ENCODE measurements at regions of chr15 and their contacts with region 1.

Region 1: DNA sequence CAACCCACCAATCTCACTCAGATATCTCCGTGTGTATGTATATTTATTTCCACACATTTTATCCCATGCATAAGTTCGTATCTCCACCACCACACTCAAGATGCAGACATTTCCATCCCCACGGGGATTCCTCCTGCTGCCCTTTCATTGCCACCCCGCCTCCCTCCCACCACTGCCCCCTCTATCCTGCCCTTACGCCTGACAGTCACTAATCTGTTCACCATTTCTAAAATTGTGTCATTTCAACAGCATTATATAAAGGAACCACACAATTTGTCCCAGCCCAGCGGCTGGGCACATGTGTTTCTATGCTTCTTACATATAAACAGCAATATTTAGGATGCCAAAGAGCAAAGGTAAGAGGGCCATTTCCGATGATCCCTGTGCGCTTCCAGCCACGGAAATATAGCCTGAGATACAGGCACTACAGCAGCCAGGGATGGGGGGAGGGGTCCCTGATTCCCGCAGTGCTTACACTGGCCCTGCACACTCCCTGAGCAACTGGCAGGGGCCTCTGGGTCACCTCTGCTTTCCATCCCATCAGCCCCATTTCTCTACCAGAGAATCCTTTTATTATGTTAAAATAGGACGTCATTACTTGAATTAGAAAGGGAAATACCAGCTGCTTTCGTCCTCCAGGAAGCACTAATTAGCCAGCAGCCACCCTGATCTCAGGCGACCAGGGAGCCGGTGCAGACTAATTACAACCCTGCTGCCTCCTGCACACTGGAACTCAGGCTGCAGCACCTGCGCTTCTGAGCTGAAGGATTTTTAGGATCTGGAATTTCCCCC is 372.0 kb upstream of the ATP10A start:
- DNase-seq: no peak
- ATAC-seq: no peak
- H3K4me3 ChIP-seq: no peak overlapping the region
- H3K27ac ChIP-seq: no peak overlapping the region
- H3K4me1 ChIP-seq: no peaks in the 10 kb centered on the region
- H3K27me3 ChIP-seq: no peaks in the 10 kb centered on the region
- CTCF ChIP-seq: no peak

Region 2: DNA sequence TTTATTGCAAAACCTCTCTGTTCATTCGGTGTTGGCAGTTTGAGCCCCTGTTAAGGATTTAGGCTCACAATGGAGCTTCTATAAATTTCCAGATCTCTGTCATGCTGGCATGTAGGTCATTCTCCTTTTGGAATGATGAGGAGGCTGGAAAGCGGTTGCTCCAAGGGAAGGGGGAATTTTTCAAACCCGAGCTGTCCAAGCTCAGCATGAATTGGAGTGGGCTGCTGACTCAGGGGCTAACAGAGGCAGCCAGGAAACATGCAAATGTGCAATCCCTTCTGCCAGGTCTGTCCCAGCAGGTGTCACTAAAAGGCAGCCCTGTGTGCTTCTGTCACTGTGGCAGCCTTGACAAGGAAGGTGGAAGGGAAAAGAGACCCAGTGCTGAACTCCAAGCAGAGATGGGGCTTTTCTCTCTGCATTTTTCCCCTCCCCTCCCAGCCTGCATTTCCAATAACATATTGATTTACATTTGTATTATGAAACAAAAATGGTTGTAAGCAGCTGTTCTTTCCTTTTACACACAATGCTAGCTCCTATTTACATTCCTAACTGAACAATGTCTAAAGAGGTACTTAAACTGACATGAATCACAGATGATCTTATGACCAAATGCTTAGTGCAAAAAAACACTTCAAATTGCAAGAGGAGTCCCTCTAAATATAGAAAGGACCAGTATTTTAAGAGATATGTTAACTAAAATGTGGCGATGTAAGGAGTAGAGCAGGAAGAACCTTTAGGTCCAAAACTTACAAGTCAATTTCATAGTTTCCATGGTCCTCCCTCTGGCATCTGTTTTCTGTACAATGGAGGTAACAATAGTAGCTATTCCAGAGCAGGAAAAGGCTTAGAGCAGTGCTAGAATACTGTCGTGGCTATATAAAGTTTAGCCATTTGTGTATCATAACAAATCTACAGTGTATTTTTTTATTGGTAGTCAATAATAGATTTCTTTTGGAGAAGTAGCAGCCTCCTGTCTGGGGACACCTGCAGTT is 287.6 kb before region 1 on chr15:
- CTCF ChIA-PET with region 1: no interaction called
- POLR2A ChIA-PET with region 1: no interaction called
- in situ Hi-C with region 1: no loop called
- intact Hi-C with region 1: no loop called
- DNase-seq: no peak
- ATAC-seq: no peak
- H3K4me3 ChIP-seq: no peak overlapping the region
- H3K27ac ChIP-seq: no peak overlapping the region
- H3K4me1 ChIP-seq: no peaks in the 10 kb centered on the region
- H3K27me3 ChIP-seq: no peaks in the 10 kb centered on the region
- CTCF ChIP-seq: peak; percentile 25

Region 3: GRCh38 chr15:26037369-26037768 is 197.8 kb before region 1 on chr15:
- CTCF ChIA-PET with region 1: no interaction called
- POLR2A ChIA-PET with region 1: no interaction called
- in situ Hi-C with region 1: no loop called
- intact Hi-C with region 1: no loop called
- DNase-seq: no peak
- ATAC-seq: no peak
- H3K4me3 ChIP-seq: no peak overlapping the region
- H3K27ac ChIP-seq: no peak overlapping the region
- H3K4me1 ChIP-seq: no peaks in the 10 kb centered on the region
- H3K27me3 ChIP-seq: no peaks in the 10 kb centered on the region
- CTCF ChIP-seq: no peak

Region 4: DNA sequence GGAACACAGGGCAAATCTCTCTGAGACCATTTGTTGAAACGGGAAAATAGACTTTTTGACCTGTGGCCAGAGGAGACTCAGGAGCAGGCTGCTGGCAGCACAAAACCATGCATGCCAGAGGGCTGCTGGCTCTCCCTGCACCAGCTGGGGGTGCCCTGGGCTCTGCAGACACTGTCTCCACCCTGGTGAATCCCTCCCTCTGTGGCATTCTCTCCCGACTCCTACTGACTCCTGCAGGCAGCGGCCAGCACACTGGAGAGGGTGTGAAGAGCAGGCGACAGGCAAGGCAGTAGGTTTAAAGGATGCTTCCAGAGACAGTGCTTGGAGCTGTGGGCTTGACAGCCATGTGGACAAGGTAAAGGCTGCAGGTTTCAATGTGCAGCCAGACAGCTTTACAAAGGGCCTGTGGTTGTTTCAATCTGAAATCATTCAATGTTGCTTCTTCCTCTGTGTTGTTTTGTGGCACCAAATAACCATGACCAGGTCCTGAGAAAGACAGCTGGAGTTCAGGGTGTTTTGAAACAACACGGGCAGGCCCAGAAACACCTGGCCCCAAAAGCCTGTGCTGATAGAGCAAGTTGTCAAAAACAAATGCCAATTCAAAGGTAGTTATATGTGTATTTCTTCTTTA is 59.0 kb after region 1 on chr15:
- CTCF ChIA-PET with region 1: no interaction called
- POLR2A ChIA-PET with region 1: no interaction called
- in situ Hi-C with region 1: no loop called
- intact Hi-C with region 1: loop called (anchors 10 kb)
- DNase-seq: no peak
- ATAC-seq: no peak
- H3K4me3 ChIP-seq: no peak overlapping the region
- H3K27ac ChIP-seq: no peak overlapping the region
- H3K4me1 ChIP-seq: no peaks in the 10 kb centered on the region
- H3K27me3 ChIP-seq: no peaks in the 10 kb centered on the region
- CTCF ChIP-seq: no peak